ENCODE measurements at regions of chr7 and their contacts with region 1.

Region 1: DNA sequence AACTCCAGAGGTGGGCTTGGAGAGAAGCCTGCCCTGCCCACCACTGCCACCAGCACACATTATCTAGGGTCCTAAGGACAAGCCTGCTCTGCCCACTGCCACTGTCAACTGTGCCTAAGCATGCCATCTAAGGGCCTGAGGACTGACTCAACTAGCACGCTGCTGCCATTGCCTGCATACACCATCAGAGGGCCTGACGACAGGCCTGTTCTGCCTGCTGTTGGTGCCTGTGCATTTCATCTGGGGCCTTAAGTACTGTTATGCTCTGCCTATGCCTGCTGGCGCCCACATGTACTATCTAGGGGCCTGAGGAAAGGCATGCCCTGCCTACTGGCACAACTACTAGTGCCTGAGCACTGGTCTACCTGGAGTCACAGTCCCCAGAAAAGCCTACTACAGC is 27.1 kb upstream of the LRRD1 start:
- DNase-seq: no peak
- ATAC-seq: no peak
- H3K4me3 ChIP-seq: no peak overlapping the region
- H3K4me1 ChIP-seq: no peaks in the 10 kb centered on the region
- CTCF ChIP-seq: no peak

Region 2: DNA sequence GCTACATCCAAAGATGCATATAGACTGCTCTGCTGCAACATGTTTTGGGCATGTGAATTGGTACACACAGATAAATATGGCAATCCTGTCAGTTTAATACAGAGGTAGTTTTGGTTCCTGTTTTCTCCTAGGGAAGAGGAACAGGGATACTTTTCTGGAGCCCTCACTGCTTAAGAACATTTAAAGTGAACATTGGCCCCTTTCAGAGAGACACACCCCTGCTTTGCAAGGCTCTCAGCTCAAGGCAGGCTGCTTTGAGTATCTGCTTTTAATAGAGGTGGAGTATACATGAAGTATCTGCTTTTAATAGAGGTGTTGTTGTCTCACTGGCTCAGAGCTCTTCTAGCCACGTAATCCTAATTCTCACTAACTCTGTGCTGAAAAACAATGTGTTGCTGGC is 110.6 kb before region 1 on chr7:
- intact Hi-C with region 1: loop called in 1 of 2 experiments (anchors 10 kb)
- DNase-seq: no peak
- ATAC-seq: no peak
- H3K4me3 ChIP-seq: no peak overlapping the region
- H3K4me1 ChIP-seq: no peaks in the 10 kb centered on the region
- CTCF ChIP-seq: no peak